Thyroid gland (tissue), 4 donors: ENCODE measurements at regions of chr4 and their contacts with region 1.

Region 1: GRCh38 chr4:38675146-38676121 is 11.4 kb downstream of the KLF3 start:
- DNase-seq: peak; percentile 84 to 86
- H3K4me3 ChIP-seq: no peak overlapping the region
- H3K27ac ChIP-seq: peak overlapping the region; percentile 73 to 97 (median 91)
- H3K4me1 ChIP-seq: peaks cover 61 to 70% of the 10 kb centered on the region in 2 donors
- H3K27me3 ChIP-seq: no peaks in the 10 kb centered on the region
- CTCF ChIP-seq: peak; percentile 73 to 90 (median 84)
- POLR2A ChIP-seq: no peak

Region 2: DNA sequence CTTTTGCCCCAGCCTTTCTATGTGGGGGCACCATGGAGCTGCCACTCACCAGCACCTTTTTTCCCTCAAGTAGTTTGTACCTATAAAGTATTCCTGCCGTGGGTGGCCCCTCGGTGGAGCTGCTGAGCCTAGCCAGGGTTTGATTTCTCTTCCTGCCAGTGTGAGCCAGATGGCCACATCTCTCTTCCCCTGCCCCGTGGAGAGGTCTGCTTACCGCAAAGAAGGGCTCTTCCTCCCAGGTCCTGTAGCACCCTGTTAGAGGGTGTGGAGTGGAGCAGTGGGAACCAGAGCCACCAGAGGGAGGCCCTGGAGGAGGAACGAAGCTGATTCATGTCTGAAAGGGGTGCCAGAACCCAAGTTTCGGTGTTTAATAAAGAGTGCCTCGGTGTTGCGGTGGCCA is 619.9 kb before region 1 on chr4:
- intact Hi-C with region 1: loop called (anchors 10 kb)
- DNase-seq: no peak
- H3K4me3 ChIP-seq: no peak overlapping the region
- H3K27ac ChIP-seq: peak overlapping the region; percentile 40 to 79 (median 50)
- H3K4me1 ChIP-seq: peaks cover 58 to 71% of the 10 kb centered on the region in 2 donors
- H3K27me3 ChIP-seq: no peaks in the 10 kb centered on the region
- CTCF ChIP-seq: no peak
- POLR2A ChIP-seq: no peak